ENCODE measurements at regions of chr2 and their contacts with region 1.

Region 1: DNA sequence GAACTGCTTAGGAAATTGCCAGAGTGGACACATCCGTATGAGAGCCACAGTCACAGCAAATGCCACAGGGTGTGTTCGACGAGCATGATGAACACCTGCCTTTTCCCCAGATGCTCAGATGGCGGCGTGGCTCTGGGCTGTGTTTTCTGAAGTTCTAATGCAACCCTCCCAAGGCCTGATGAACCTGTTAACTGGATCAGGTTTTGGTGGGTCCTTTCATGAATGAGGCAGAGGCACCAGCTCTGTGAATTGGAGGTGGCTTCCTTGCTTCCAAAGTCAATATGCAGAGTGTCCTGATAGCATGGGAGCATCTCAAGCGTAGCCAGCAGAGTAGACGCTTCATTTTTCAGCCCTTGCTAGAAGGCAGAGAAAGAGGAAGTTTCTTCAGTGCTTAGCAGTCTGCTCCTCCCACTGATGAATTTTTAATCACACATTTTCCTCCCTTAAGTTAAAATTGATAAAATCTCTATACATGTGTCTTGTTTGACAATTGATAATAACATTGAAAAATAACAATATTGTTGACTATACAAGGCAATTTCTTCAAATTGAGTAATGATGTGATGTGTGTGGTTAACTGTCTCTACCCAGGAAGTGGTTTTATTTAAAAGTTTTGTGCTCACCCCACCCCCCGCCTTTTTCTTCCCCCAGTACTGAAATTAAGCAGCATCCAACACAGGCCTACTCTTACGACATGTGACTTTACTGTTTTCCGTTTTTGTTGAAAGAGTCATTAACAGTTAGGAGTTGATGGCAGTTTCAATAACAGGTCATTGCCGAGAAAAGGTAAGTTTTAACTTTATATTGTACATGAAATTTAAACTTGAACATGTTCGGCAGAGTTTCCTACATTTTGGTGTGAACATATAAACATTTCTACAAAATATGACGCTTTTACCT is at the start of gene ARHGAP15:
- DNase-seq: peak; percentile 88
- ATAC-seq: peak; percentile 85
- H3K4me3 Mint-ChIP-seq: peak within 1 kb of the TSS; percentile 77
- H3K27ac Mint-ChIP-seq: peak within 1 kb of the TSS; percentile 100
- H3K4me1 Mint-ChIP-seq: peaks cover 46% of the 10 kb centered on the region
- H3K27me3 Mint-ChIP-seq: no peaks in the 10 kb centered on the region
- total RNA-seq, gene ARHGAP15: 101 to 152 TPM

Region 2: GRCh38 chr2:143140864-143141661 is 12.1 kb after region 1 on chr2:
- CTCF ChIA-PET with region 1: interaction called, 14 read pairs
- DNase-seq: no peak
- ATAC-seq: peak; percentile 43
- H3K4me3 Mint-ChIP-seq: peak overlapping the region; percentile 0
- H3K27ac Mint-ChIP-seq: peak overlapping the region; percentile 8
- H3K4me1 Mint-ChIP-seq: peaks cover 76% of the 10 kb centered on the region
- H3K27me3 Mint-ChIP-seq: no peaks in the 10 kb centered on the region